ENCODE measurements at regions of chr12 and their contacts with region 1.

Region 1: GRCh38 chr12:94218233-94218632 is 69.9 kb downstream of the PLXNC1 start:
- DNase-seq: peak in 1 of 3 donors; percentile 8
- H3K4me3 ChIP-seq: no peak overlapping the region
- H3K27ac ChIP-seq: no peak overlapping the region
- H3K4me1 ChIP-seq: peaks cover 0 to 3% (median 0%) of the 10 kb centered on the region in 4 experiments
- H3K27me3 ChIP-seq: no peaks in the 10 kb centered on the region

Region 2: GRCh38 chr12:94207849-94208621 is 10.2 kb before region 1 on chr12:
- CTCF ChIA-PET with region 1: interaction called, 12 read pairs
- POLR2A ChIA-PET with region 1: interaction called, 3 read pairs
- DNase-seq: peak; percentile 78 to 92 (median 90)
- H3K4me3 ChIP-seq: peak overlapping the region in 6 of 7 experiments; percentile 40 to 69 (median 54)
- H3K27ac ChIP-seq: peak overlapping the region; percentile 84 to 91
- H3K4me1 ChIP-seq: peaks cover 54 to 67% (median 59%) of the 10 kb centered on the region in 4 experiments
- H3K27me3 ChIP-seq: no peaks in the 10 kb centered on the region